PC-3 (cell line): ENCODE measurements at regions of chr16 and their contacts with region 1.

Region 1: GRCh38 chr16:72066747-72067146 is 3.7 kb downstream of the HPR start:
- DNase-seq: peak; percentile 42
- ATAC-seq: peak; percentile 70
- H3K4me3 ChIP-seq: no peak overlapping the region
- H3K27ac ChIP-seq: no peak overlapping the region
- H3K4me1 ChIP-seq: no peaks in the 10 kb centered on the region
- H3K27me3 ChIP-seq: 0 out of 2 replicates have a peak, but pooled peaks cover 3% of the 10 kb centered on the region
- CTCF ChIP-seq: peak; percentile 65

Region 2: GRCh38 chr16:72099377-72099818 is 32.7 kb after region 1 on chr16:
- CTCF ChIA-PET with region 1: no interaction called
- POLR2A ChIA-PET with region 1: no interaction called
- intact Hi-C with region 1: loop called (anchors 1 kb)
- DNase-seq: peak; percentile 63
- ATAC-seq: peak; percentile 90
- H3K4me3 ChIP-seq: no peak overlapping the region
- H3K27ac ChIP-seq: no peak overlapping the region
- H3K4me1 ChIP-seq: peaks cover 8% of the 10 kb centered on the region; the same call in 1 of the 2 replicates
- H3K27me3 ChIP-seq: no peaks in the 10 kb centered on the region
- CTCF ChIP-seq: peak; percentile 66